PC-9 (cell line): ENCODE measurements at regions of chr9 and their contacts with region 1.

Region 1: GRCh38 chr9:81848472-81848871 is 79.8 kb upstream of the SPATA31D4 start:
- DNase-seq: no peak
- H3K4me3 ChIP-seq: no peak overlapping the region
- H3K27ac ChIP-seq: no peak overlapping the region
- H3K4me1 ChIP-seq: peaks cover 20% of the 10 kb centered on the region
- H3K27me3 ChIP-seq: no peaks in the 10 kb centered on the region
- CTCF ChIP-seq: peak; percentile 54; the same call in 1 of the 2 replicates

Region 2: GRCh38 chr9:81754245-81754644 is 94.2 kb before region 1 on chr9:
- CTCF ChIA-PET with region 1: no interaction called
- POLR2A ChIA-PET with region 1: no interaction called
- intact Hi-C with region 1: no loop called
- DNase-seq: no peak
- H3K4me3 ChIP-seq: no peak overlapping the region
- H3K27ac ChIP-seq: no peak overlapping the region
- H3K4me1 ChIP-seq: no peaks in the 10 kb centered on the region
- H3K27me3 ChIP-seq: no peaks in the 10 kb centered on the region
- CTCF ChIP-seq: no peak

Region 3: GRCh38 chr9:81787747-81788632 is 60.5 kb before region 1 on chr9:
- CTCF ChIA-PET with region 1: no interaction called
- POLR2A ChIA-PET with region 1: no interaction called
- intact Hi-C with region 1: loop called (anchors 5 kb)
- DNase-seq: peak; percentile 71 to 93
- H3K4me3 ChIP-seq: no peak overlapping the region
- H3K27ac ChIP-seq: peak overlapping the region; percentile 44
- H3K4me1 ChIP-seq: peaks cover 18% of the 10 kb centered on the region
- H3K27me3 ChIP-seq: no peaks in the 10 kb centered on the region
- CTCF ChIP-seq: no peak

Region 4: GRCh38 chr9:82037126-82037525 is 188.7 kb after region 1 on chr9:
- CTCF ChIA-PET with region 1: no interaction called
- POLR2A ChIA-PET with region 1: no interaction called
- intact Hi-C with region 1: no loop called
- DNase-seq: no peak
- H3K4me3 ChIP-seq: no peak overlapping the region
- H3K27ac ChIP-seq: no peak overlapping the region
- H3K4me1 ChIP-seq: no peaks in the 10 kb centered on the region
- H3K27me3 ChIP-seq: no peaks in the 10 kb centered on the region
- CTCF ChIP-seq: no peak